ENCODE measurements at regions of chr4 and their contacts with region 1.

Region 1: DNA sequence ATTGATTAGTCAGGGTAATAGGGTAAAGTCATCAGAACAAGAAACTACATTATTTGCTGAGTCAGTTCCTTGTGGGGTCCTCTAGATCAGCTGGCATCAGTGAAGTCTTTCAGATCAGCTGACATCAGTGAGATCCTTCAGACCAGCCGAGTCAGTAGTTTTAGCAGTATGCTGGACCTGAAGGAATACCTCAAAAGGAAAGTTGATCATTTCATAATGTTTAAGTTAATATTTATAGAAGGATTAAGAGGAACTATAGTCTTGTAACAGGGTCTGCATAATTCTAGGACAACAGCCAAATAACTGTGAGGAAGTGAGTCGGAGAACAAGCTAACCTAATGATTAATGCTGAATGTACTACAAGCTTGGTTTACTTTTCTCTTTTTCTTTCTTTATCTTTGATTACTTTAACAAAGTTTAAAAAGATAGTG is 958 bp upstream of the UGT2B7 start:
- DNase-seq: peak; percentile 96
- ATAC-seq: peak; percentile 86
- H3K4me3 ChIP-seq: 0 out of 2 replicates have a peak overlapping the region, but pooled peaks have one; percentile 9
- H3K27ac ChIP-seq: peak overlapping the region; percentile 89
- H3K4me1 ChIP-seq: peaks cover 59% of the 10 kb centered on the region
- H3K27me3 ChIP-seq: no peaks in the 10 kb centered on the region
- CTCF ChIP-seq: no peak

Region 2: DNA sequence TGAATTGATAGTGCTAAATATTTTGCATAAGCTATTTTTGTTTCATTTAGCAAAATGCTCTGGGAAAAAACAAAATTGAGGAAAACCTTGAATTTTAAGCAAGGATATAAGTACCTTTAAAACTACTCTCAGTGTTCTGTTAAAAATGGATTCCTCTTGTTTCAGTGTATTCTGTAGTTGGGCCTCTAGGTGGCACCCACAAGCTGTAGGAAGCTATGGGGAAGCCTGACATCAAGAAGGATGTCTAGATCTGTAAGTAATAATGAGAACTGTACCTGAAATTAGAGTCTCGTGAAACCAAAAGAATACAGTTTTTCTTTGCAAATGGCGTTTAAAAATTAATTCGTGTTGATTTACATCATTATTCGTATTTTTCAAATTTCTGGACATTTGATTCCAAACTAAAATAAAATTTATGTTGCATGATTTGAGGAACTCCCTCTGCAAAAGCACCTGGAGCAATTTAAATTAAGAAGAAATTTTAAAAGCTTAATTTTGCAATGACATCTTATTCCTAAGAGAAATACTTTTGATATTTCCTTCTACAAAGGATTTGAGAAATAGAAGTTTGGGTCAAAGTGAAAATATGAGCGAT is 596.8 kb before region 1 on chr4:
- CTCF ChIA-PET with region 1: no interaction called
- POLR2A ChIA-PET with region 1: no interaction called
- intact Hi-C with region 1: loop called (anchors 5 kb)
- DNase-seq: peak; percentile 84
- ATAC-seq: peak; percentile 60
- H3K4me3 ChIP-seq: no peak overlapping the region
- H3K27ac ChIP-seq: no peak overlapping the region
- H3K4me1 ChIP-seq: peaks cover 9% of the 10 kb centered on the region; the same call in 1 of the 2 replicates
- H3K27me3 ChIP-seq: no peaks in the 10 kb centered on the region
- CTCF ChIP-seq: peak; percentile 98

Region 3: DNA sequence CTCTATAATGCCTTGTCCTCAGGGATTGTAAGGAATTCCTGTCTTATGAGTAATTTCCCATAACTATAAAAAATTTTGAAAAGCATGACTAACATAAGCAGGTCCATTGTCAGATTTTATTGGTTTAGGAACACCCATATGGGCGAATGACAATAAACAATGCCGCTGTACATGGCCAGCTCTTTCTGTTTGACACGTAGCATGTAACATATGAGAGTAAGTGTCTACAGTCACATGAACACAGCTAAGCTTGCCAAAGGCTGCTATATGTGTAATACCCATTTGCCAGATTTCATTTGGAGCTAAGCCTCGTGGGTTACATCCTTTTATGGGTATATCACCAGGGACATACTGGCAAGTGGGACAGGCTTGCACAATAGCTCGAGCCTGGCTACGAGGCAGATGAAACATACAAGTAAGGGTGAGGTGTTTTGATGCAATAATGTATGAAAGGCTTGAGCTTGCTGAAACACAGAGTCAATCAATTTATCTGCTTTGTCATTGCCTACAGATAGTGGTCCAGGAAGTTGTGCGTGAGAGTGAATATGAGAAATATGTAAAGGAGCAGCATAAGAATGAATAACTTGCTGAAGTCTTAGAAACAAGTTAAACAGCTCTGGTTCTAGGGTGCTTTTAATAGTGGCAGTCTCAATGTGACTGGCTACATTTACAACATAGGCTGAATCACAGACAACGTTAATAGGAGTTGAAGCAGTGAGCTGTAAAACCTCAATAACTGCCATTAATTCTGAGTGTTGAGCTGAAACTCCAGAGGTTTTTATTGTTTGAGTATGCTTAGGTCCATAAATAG is 346.9 kb before region 1 on chr4:
- CTCF ChIA-PET with region 1: no interaction called
- POLR2A ChIA-PET with region 1: no interaction called
- intact Hi-C with region 1: loop called (anchors 1 kb)
- DNase-seq: peak; percentile 98
- ATAC-seq: peak; percentile 87
- H3K4me3 ChIP-seq: peak overlapping the region; percentile 44; the same call in 1 of the 2 replicates
- H3K27ac ChIP-seq: peak overlapping the region; percentile 96
- H3K4me1 ChIP-seq: peaks cover 21% of the 10 kb centered on the region
- H3K27me3 ChIP-seq: no peaks in the 10 kb centered on the region
- CTCF ChIP-seq: no peak

Region 4: DNA sequence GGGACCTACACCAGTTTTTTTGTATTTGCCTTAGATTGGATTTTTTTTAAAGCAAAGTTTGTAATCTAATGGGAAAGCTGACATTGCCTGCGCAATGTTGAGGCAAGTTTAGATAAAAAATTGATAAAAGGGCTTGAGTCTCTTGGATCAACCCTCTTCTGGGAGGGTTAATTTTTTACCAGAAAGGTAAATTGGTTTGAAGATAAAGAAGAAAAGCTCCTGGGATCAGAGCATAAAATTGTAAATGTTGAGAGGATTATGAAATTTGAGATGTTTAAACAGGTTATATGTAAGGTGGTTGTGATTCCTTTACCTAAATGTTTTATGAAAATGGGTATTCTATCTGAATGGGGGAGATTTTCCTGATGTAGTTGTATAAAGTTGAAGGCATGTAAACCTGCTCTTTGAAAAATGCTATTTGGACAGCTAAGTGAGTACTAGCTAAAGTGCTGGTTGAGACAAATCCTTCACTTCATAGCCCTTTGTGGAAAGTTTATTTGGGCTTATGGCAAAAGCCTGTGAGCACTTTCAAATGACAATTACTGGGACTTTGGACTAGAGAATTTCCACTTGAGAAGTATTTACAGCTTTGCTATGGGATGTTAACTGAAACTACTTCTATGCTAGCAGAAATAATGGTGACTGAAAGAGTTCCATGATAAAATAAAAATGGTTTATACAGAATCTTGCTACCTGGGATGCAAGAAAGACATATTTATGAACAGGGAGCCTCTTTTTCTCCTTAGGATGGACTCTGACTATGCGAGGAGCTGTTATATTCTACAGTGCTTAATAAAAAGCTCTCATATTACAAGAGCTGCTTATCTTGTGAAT is 223.3 kb before region 1 on chr4:
- CTCF ChIA-PET with region 1: no interaction called
- POLR2A ChIA-PET with region 1: no interaction called
- intact Hi-C with region 1: loop called (anchors 5 kb)
- DNase-seq: peak; percentile 31
- ATAC-seq: peak; percentile 56; the same call in 1 of the 2 replicates
- H3K4me3 ChIP-seq: no peak overlapping the region
- H3K27ac ChIP-seq: no peak overlapping the region
- H3K4me1 ChIP-seq: peaks cover 25% of the 10 kb centered on the region
- H3K27me3 ChIP-seq: no peaks in the 10 kb centered on the region
- CTCF ChIP-seq: no peak

Region 5: GRCh38 chr4:68951078-68951805 is 144.1 kb before region 1 on chr4 and contains the start of gene UGT2A3:
- CTCF ChIA-PET with region 1: no interaction called
- POLR2A ChIA-PET with region 1: no interaction called
- intact Hi-C with region 1: loop called (anchors 10 kb)
- DNase-seq: no peak
- ATAC-seq: no peak
- H3K4me3 ChIP-seq: no peak within 1 kb of the TSS
- H3K27ac ChIP-seq: no peak within 1 kb of the TSS
- H3K4me1 ChIP-seq: no peaks in the 10 kb centered on the region
- H3K27me3 ChIP-seq: no peaks in the 10 kb centered on the region
- CTCF ChIP-seq: no peak
- total RNA-seq, gene UGT2A3: not detected in 2 replicates

Region 6: DNA sequence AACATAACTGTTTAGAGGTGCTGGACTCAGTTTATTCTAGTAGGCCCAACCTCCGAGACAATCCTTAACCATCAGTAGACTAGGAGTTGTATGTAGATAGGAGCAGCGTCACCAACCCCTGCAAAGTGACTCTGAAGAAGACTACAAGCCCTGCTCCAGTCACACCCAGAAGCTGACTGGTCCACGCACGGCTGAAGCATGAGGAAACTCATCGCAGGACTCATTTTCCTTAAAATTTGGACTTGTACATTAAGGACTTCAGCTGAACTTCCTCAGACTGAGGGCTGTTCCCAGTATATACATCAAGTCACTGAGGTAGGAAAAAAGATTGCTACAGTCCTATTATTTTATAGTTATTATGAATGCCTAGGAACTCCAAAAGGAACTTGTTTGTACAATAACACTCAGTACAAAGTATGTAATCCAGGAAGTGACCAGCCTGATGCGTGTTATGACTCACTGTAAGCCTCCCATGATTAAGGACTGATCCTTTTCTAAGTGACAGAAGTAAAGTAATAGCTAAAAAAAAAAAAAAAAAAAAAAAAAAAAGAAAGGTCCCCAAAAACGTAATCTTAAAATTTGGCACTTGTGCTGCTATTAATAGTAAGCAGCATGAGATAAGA is 40.6 kb before region 1 on chr4:
- CTCF ChIA-PET with region 1: no interaction called
- POLR2A ChIA-PET with region 1: no interaction called
- intact Hi-C with region 1: loop called (anchors 2 kb)
- DNase-seq: peak; percentile 91
- ATAC-seq: peak; percentile 99
- H3K4me3 ChIP-seq: no peak overlapping the region
- H3K27ac ChIP-seq: peak overlapping the region; percentile 81
- H3K4me1 ChIP-seq: peaks cover 21% of the 10 kb centered on the region
- H3K27me3 ChIP-seq: no peaks in the 10 kb centered on the region
- CTCF ChIP-seq: no peak

Measured in PC-3 (cell line).